HepG2 (cell line): ENCODE measurements at regions of chr13 and their contacts with region 1.

Region 1: DNA sequence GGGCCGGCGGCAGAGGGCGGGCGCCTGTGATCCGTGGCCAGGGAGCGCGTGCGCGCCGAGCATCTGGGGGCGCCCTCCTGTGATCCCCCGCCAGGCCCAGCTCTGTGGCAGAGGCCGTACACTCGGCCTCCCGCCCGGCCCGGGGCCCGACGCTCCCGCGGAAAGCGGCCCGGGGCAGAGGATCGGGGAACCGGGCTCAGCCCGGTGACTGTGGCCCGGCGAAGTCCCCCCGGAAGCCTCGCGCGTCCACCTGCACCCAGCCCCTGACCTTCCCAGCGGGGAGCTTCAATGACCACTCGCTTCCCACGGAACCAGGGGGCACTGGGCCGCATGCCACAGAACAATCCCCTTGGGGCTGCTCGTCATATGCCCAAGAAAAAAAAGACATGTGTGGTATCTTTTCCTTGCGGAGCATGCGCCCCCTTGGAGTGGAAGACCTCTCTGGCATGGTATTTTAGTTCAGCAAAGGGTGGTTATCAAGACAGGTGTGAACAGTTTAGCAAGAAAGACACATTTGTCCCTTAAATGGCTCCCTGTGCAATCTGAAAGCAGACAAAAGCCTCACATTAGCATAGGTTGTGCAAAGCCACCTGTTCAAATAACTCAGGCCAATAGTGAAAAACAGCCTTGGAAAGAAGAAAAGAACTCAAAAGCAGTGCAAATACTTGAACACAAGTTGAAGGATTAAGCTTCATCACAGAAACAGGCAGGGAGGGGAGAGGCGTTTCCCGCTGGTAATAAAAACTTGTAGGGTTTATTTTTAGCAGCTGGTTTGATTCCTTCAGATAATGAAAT is 290.9 kb upstream of the SOX21 start:
- DNase-seq: no peak
- ATAC-seq: no peak; the same call in 1 of the 3 replicates
- H3K4me3 ChIP-seq: no peak overlapping the region
- H3K27ac ChIP-seq: no peak overlapping the region
- H3K4me1 ChIP-seq: peaks cover 19% of the 10 kb centered on the region
- H3K27me3 ChIP-seq: peaks cover 2 to 4% of the 10 kb centered on the region in 2 experiments; a peak in 1 of 5 replicates
- CTCF ChIP-seq: no peak
- EP300 ChIP-seq: no peak
- POLR2A ChIP-seq: no peak
- RAD21 ChIP-seq: no peak

Region 2: GRCh38 chr13:94956417-94957110 is 46.7 kb before region 1 on chr13:
- CTCF ChIA-PET with region 1: no interaction called
- POLR2A ChIA-PET with region 1: no interaction called
- in situ Hi-C with region 1: no loop called
- intact Hi-C with region 1: no loop called
- DNase-seq: no peak
- ATAC-seq: no peak
- H3K4me3 ChIP-seq: no peak overlapping the region
- H3K27ac ChIP-seq: no peak overlapping the region
- H3K4me1 ChIP-seq: no peaks in the 10 kb centered on the region
- H3K27me3 ChIP-seq: no peaks in the 10 kb centered on the region
- CTCF ChIP-seq: no peak
- EP300 ChIP-seq: no peak
- POLR2A ChIP-seq: no peak
- RAD21 ChIP-seq: no peak

Region 3: GRCh38 chr13:95181586-95181985 is 178.4 kb after region 1 on chr13:
- CTCF ChIA-PET with region 1: no interaction called
- POLR2A ChIA-PET with region 1: no interaction called
- in situ Hi-C with region 1: no loop called
- intact Hi-C with region 1: loop called (anchors 10 kb)
- DNase-seq: no peak
- ATAC-seq: peak; percentile 17; the same call in 2 of the 3 replicates
- H3K4me3 ChIP-seq: no peak overlapping the region
- H3K27ac ChIP-seq: no peak overlapping the region
- H3K4me1 ChIP-seq: peaks cover 21% of the 10 kb centered on the region
- H3K27me3 ChIP-seq: no peaks in the 10 kb centered on the region
- CTCF ChIP-seq: no peak
- EP300 ChIP-seq: no peak
- POLR2A ChIP-seq: no peak
- RAD21 ChIP-seq: no peak